ENCODE measurements at regions of chr2 and their contacts with region 1.

Region 1: DNA sequence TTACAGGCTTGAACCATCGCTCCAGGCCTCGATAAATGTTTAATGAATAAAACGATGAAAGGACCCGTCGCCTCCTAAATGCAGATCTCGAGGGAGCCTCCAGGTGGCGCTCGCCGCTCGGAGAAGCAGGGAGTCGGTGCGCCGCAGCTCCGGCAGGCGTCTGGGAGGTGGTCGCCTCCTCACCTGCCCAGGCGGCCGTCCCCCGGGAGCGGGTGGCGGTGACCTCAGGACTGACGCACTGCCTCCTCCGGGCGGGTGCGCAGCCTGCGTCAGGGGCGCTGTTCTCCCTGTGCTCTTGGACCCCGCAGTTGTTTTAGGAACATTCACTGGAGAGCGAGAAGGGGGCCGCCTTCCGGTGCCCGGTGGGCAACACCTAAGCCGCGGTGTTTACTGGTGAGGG is 38.6 kb upstream of the POLE4 start:
- DNase-seq: peak; percentile 72
- ATAC-seq: peak; percentile 88
- H3K4me3 Mint-ChIP-seq: peak overlapping the region; percentile 42
- H3K27ac Mint-ChIP-seq: no peak overlapping the region
- H3K4me1 Mint-ChIP-seq: peaks cover 14% of the 10 kb centered on the region
- H3K27me3 Mint-ChIP-seq: peaks cover 10% of the 10 kb centered on the region
- CTCF ChIP-seq: peak; percentile 57

Region 2: DNA sequence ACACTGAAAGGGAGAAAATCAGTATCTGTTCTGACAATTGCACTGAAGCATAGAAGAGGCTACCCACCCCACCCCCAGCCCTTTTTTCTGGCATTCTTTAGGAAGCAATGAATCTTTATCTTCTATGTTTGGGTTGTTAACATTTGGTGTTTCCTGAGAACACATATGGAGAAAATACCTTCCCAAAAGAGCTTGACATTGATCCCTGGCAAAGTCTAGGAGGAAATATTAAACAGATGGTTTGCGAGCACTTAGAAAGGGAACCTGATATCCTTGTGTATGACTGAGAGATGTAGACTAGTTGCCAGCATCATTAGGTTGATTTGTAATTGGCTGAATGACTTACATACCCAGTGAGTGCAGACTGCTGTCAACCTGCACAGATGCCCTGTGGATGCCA is 322.4 kb before region 1 on chr2:
- CTCF ChIA-PET with region 1: no interaction called
- POLR2A ChIA-PET with region 1: no interaction called
- intact Hi-C with region 1: no loop called
- DNase-seq: no peak
- ATAC-seq: no peak
- H3K4me3 Mint-ChIP-seq: no peak overlapping the region
- H3K27ac Mint-ChIP-seq: no peak overlapping the region
- H3K4me1 Mint-ChIP-seq: peaks cover 5% of the 10 kb centered on the region
- H3K27me3 Mint-ChIP-seq: peaks cover 24% of the 10 kb centered on the region
- CTCF ChIP-seq: no peak

Region 3: DNA sequence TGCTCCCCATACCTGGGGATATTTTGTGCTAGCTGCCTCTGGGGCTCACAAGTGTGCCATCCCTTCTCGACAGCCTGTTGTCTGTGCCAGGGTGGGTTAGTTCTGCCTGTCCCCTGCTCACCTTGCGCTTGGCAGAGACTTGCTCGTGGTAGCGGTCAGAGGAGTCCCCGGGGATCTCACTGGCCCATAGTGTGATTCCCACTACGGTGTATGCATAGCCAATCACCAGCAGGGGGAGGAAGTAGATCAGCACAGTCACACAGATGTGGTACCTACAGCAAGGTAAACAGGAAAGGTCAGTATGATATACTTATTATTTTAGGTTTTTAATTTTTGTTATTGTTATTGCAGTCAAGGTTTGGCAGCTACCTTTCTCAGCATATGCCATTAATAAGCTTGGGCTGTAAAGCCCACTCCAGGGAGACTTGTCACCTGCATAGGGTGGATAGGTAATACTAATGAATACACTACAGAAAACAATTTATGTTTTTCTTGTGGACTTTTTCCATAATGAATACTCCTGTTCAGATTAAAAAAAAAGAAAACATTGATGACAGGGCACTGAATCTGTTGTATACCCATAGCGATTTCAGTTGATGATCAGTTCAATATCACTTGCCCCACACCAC is 133.8 kb after region 1 on chr2:
- CTCF ChIA-PET with region 1: interaction called, 4 read pairs
- POLR2A ChIA-PET with region 1: no interaction called
- intact Hi-C with region 1: loop called (anchors 5 kb)
- DNase-seq: no peak
- ATAC-seq: peak; percentile 62
- H3K4me3 Mint-ChIP-seq: no peak overlapping the region
- H3K27ac Mint-ChIP-seq: no peak overlapping the region
- H3K4me1 Mint-ChIP-seq: no peaks in the 10 kb centered on the region
- H3K27me3 Mint-ChIP-seq: no peaks in the 10 kb centered on the region
- CTCF ChIP-seq: no peak

Region 4: GRCh38 chr2:75064691-75065396 is 145.0 kb after region 1 on chr2:
- CTCF ChIA-PET with region 1: interaction called, 4 read pairs
- POLR2A ChIA-PET with region 1: no interaction called
- intact Hi-C with region 1: loop called (anchors 1 kb)
- DNase-seq: peak; percentile 42
- ATAC-seq: no peak
- H3K4me3 Mint-ChIP-seq: no peak overlapping the region
- H3K27ac Mint-ChIP-seq: no peak overlapping the region
- H3K4me1 Mint-ChIP-seq: no peaks in the 10 kb centered on the region
- H3K27me3 Mint-ChIP-seq: no peaks in the 10 kb centered on the region
- CTCF ChIP-seq: peak; percentile 56

Region 5: GRCh38 chr2:75199428-75200011 is 279.7 kb after region 1 on chr2 and contains the start of gene TACR1:
- CTCF ChIA-PET with region 1: interaction called, 9 read pairs
- POLR2A ChIA-PET with region 1: no interaction called
- intact Hi-C with region 1: loop called (anchors 1 kb)
- DNase-seq: peak; percentile 55
- ATAC-seq: peak; percentile 79
- H3K4me3 Mint-ChIP-seq: peak within 1 kb of the TSS; percentile 81
- H3K27ac Mint-ChIP-seq: no peak within 1 kb of the TSS
- H3K4me1 Mint-ChIP-seq: peaks cover 20% of the 10 kb centered on the region
- H3K27me3 Mint-ChIP-seq: peaks cover 61% of the 10 kb centered on the region
- CTCF ChIP-seq: peak; percentile 43
- total RNA-seq, gene TACR1: not detected in 2 replicates

Region 6: GRCh38 chr2:75241696-75242095 is 321.9 kb after region 1 on chr2:
- CTCF ChIA-PET with region 1: interaction called, 3 read pairs
- POLR2A ChIA-PET with region 1: no interaction called
- intact Hi-C with region 1: loop called (anchors 5 kb)
- DNase-seq: no peak
- ATAC-seq: no peak
- H3K4me3 Mint-ChIP-seq: no peak overlapping the region
- H3K27ac Mint-ChIP-seq: no peak overlapping the region
- H3K4me1 Mint-ChIP-seq: no peaks in the 10 kb centered on the region
- H3K27me3 Mint-ChIP-seq: no peaks in the 10 kb centered on the region
- CTCF ChIP-seq: no peak

Measured in activated B cell treated with CpG ODN at 0.5 μM for 24 hours (primary cell).